ENCODE measurements at regions of chr6 and their contacts with region 1.

Region 1: GRCh38 chr6:108492131-108492766 is 68.5 kb upstream of the FOXO3 start:
- DNase-seq: peak; percentile 9
- H3K4me3 ChIP-seq: no peak overlapping the region
- H3K27ac ChIP-seq: no peak overlapping the region
- H3K4me1 ChIP-seq: no peaks in the 10 kb centered on the region
- H3K27me3 ChIP-seq: no peaks in the 10 kb centered on the region
- CTCF ChIP-seq: peak; percentile 24 to 67 (median 50)
- POLR2A ChIP-seq: no peak

Region 2: DNA sequence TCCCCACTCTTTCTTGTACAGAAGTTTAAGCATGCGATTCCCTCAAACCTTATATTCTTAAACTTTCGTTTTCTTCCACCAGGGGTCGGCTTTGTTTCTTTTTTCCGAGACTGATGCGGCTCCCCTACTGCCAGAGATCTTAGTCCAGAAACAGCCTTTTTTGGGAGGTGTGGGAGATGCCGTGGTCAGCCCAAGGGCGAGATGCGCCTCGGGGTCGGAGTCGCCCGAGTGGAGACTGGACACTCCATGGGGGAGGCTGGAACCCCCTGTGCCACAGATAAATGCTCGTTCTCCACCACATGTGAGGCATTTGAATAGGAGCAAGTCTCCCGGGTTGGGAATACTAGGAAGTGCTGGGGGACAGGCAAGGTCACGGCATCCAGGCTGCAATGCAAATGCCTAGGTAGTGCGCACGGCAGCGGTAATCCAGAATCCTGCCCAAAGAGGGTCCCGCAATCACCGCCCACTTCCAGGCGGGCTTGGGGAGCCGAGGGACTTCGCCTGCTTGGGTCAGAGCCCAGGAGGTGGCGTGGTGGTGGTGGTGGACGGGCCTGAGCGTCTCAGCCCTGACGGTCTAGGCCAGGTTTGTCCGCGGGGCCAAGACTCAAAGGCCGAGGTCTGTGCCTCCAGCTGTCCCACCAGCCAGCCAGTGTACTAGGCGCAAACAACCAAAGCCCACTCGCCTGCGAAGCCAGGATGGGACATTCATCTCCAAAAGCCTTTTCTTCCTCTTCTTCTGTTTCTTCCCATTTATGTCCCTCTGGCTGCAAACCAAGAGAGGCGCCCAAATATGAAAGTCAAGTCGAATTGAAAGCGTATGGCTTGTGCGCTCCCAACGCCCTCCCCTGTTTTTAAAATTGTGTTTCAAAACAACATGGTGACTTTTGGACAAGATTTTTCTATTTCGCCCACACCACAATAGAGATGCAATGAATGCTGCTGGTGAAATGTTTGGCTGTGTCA is 378.4 kb before region 1 on chr6:
- intact Hi-C with region 1: loop called (anchors 10 kb)
- DNase-seq: no peak
- H3K4me3 ChIP-seq: no peak overlapping the region
- H3K27ac ChIP-seq: no peak overlapping the region
- H3K4me1 ChIP-seq: peaks cover 2% of the 10 kb centered on the region
- H3K27me3 ChIP-seq: peaks cover 12% of the 10 kb centered on the region
- CTCF ChIP-seq: peak; percentile 25 to 68 (median 64)
- POLR2A ChIP-seq: no peak

Region 3: DNA sequence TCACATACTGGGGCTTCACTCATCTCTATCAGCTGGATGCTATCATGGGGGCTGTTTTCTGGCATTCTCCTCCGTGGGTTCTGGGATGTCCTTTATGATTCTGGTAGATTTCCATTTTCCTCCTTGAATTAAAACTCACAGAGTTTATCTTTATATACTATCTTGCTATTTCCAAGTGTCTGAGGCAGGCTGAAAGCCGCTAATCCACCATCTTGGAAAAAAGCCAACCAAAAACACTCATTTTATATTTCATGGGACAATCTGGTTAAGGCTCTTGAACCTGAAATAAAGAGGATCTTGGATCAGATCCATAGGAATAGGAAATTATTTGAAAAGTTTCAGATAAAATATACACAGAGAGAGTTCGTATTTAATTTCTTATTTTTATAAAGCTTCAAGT is 111.4 kb before region 1 on chr6:
- intact Hi-C with region 1: no loop called
- DNase-seq: no peak
- H3K4me3 ChIP-seq: no peak overlapping the region
- H3K27ac ChIP-seq: no peak overlapping the region
- H3K4me1 ChIP-seq: no peaks in the 10 kb centered on the region
- H3K27me3 ChIP-seq: no peaks in the 10 kb centered on the region
- CTCF ChIP-seq: no peak
- POLR2A ChIP-seq: no peak